ENCODE measurements at regions of chr7 and their contacts with region 1.

Region 1: GRCh38 chr7:104914421-104914820 is 99.6 kb upstream of the KMT2E start:
- DNase-seq: no peak
- H3K4me3 Mint-ChIP-seq: no peak overlapping the region
- H3K27ac Mint-ChIP-seq: no peak overlapping the region
- H3K4me1 Mint-ChIP-seq: no peaks in the 10 kb centered on the region
- H3K27me3 Mint-ChIP-seq: peaks cover 29% of the 10 kb centered on the region

Region 2: GRCh38 chr7:104643587-104644217 is 270.7 kb before region 1 on chr7:
- intact Hi-C with region 1: loop called (anchors 10 kb)
- DNase-seq: no peak
- H3K4me3 Mint-ChIP-seq: no peak overlapping the region
- H3K27ac Mint-ChIP-seq: no peak overlapping the region
- H3K4me1 Mint-ChIP-seq: no peaks in the 10 kb centered on the region
- H3K27me3 Mint-ChIP-seq: peaks cover 3% of the 10 kb centered on the region

Region 3: DNA sequence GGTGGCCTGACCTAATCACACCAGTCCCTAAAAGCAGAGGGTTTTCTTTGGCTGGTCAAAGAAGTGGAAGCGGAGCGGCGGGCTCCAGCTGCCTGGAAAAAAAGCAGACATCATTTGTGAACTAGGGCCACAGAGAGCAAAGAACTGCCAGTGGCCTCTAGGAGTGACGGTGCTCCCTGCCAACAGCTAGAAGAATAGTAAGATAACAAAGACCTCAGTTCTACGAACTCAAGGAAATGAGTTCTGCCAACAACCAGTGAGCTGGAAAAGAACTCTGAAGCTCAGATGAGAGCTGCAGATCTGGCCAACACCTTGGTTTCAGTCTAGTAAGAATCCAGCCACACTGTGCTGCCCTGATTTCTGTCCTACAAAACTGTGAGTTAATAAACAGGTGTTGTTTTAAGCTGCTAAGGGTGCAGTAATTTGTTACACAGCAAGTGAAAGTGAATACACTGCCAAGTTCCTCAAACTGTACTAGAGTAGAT is 296.3 kb after region 1 on chr7:
- intact Hi-C with region 1: no loop called
- DNase-seq: no peak
- H3K4me3 Mint-ChIP-seq: peak overlapping the region; percentile 33
- H3K27ac Mint-ChIP-seq: peak overlapping the region; percentile 12
- H3K4me1 Mint-ChIP-seq: peaks cover 44% of the 10 kb centered on the region
- H3K27me3 Mint-ChIP-seq: no peaks in the 10 kb centered on the region